Activated naive CD4-positive, alpha-beta T cell treated with anti-CD3 and anti-CD28 coated beads for 36 hours (primary cell): ENCODE measurements at regions of chrX and their contacts with region 1.

Region 1: DNA sequence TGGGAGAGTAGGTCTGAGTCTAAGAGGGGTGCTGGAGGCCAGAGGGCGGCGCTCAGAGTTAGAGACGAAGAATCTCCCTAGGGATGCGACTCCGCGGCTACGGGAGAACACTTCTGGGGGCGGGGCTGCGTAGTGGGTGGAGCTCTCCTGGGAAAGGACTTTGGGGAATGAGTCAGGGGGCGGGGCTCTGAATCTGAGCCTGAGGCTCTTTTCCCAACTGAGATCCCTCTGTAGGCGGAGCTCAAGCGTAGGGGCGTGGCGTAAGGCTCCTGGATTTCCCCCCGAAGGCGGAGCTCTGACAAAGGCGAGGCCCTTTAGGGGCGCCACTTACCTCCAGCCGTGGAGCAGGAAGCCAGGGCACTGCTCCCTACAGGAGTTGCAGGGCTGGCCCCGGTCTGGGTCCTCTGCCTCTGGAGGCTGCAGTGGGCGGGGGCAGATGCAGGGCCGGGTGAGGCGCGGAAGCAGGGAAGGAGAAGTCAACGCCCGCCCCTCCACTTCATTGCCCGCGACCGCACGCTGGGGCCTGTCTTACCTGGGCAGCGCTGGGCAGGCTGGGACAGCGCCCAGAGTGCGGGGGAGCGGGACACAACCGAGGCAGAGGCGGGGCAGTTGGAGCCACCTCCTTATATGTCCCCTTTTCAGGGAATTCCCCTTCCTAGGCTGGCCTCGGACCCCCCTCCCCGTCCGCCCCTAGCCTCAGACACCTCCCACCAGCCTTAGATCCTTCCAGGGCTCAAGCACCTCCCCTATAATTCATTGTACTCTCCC is 1.7 kb downstream of the PRICKLE3 start:
- DNase-seq: peak; percentile 70
- H3K4me3 Mint-ChIP-seq: peak overlapping the region; percentile 83
- H3K27ac Mint-ChIP-seq: peak overlapping the region; percentile 84
- H3K4me1 Mint-ChIP-seq: peaks cover 12% of the 10 kb centered on the region
- H3K27me3 Mint-ChIP-seq: no peaks in the 10 kb centered on the region

Region 2: DNA sequence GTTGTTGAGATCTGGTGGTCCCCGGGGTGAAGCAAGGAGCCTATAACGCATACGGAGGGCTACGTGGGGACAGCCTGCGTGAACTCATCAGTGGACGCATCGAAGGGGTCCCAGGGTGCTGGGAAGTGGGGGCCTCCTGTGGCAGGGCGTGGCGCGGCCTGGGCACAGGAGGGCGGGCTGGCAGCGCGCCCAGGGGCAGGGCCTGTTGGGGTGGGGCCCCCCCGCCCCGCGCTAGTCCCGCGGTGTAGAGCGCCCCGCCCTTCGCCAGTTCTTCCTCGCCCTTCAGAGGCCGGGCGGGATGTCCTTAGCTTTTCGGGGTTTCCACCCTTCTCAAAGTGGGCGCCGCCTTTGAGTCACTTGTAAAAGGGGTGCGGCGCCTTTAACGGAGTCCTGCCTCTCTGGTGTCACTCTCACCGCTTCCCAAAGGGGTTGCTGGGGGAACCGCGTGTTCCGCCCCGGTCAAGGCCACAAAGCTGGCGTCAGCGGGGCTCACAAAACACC is 12.1 kb before region 1 on chrX:
- CTCF ChIA-PET with region 1: no interaction called
- intact Hi-C with region 1: loop called (anchors 1 kb)
- DNase-seq: peak; percentile 86
- H3K4me3 Mint-ChIP-seq: peak overlapping the region; percentile 89
- H3K27ac Mint-ChIP-seq: peak overlapping the region; percentile 91
- H3K4me1 Mint-ChIP-seq: peaks cover 27% of the 10 kb centered on the region
- H3K27me3 Mint-ChIP-seq: no peaks in the 10 kb centered on the region

Region 3: DNA sequence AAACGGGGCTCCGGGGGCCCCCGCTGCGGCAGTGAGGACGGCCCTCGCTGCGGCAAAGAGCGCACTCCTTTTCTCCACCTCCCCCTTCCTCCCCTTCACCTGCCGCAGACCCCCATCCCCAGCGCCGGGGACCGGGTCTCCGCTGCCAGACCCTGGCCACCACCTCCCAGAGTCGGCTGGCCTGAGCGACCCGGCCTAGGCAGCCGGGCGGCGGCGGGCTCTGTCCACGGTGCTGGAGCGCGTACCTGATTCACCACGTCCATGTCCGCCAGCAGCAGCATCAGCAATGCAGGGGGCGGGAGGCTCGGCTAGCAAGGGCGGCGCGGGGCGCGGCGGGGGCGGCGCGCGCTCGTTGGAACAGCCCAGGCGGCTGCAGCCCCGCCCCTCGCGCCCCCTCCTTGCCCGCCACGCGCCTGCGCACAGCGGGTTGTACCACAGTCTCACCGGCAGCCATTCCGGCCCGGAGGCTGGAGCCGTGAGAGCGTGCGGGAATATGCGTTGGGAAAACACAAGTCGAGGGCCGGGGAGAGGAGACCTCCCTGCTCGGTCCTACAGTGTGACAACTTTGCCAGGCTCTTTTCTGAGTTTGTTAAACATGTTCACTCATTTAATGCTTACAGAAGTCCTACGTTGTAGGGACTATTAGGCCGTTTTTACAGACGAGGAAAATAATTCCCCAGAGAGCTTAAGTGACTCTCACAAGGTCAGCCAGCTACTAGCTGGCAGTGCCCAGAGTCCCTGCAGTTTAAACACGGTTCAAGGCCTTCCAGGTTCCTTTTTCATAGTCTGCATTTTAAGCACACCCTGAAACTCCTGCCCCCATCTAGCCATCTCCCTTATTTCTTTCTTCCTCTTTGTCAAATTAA is 15.7 kb after region 1 on chrX and contains the start of gene SYP:
- CTCF ChIA-PET with region 1: no interaction called
- intact Hi-C with region 1: no loop called
- DNase-seq: peak; percentile 91
- H3K4me3 Mint-ChIP-seq: peak within 1 kb of the TSS; percentile 64
- H3K27ac Mint-ChIP-seq: peak within 1 kb of the TSS; percentile 63
- H3K4me1 Mint-ChIP-seq: peaks cover 19% of the 10 kb centered on the region
- H3K27me3 Mint-ChIP-seq: no peaks in the 10 kb centered on the region
- total RNA-seq, gene SYP: 2.5 to 2.6 TPM